Vagina (tissue), 2 donors: ENCODE measurements at regions of chr11 and their contacts with region 1.

Region 1: GRCh38 chr11:32052218-32052617 is 38.7 kb upstream of the RCN1 start:
- DNase-seq: no peak
- H3K4me3 ChIP-seq: no peak overlapping the region
- H3K27ac ChIP-seq: no peak overlapping the region
- H3K4me1 ChIP-seq: no peaks in the 10 kb centered on the region
- H3K27me3 ChIP-seq: no peaks in the 10 kb centered on the region
- CTCF ChIP-seq: peak; percentile 48 to 66 (median 64)
- POLR2A ChIP-seq: no peak

Region 2: DNA sequence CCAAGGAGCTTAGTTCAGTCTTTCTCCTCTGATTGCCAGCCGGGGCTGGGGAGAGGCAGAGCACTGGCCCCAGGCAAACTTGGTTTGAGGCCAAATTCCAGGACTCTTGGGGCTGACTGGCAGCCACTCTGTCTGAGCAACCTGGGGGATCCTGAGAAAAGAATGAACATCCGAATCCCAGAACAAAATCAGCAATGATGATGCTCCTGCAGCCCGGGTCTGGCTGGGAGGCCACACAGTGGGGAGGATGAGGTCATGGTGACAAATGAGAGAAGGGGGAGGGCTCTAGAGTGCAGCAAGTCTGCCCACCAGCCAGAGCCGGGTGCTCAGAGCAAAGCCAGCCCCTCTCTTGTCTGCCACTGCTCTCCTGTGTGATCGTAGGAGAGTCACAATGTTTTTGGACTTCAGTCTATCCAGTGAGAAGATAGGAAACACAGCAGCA is 169.2 kb before region 1 on chr11:
- intact Hi-C with region 1: no loop called
- DNase-seq: no peak
- H3K4me3 ChIP-seq: no peak overlapping the region
- H3K27ac ChIP-seq: no peak overlapping the region
- H3K4me1 ChIP-seq: no peaks in the 10 kb centered on the region
- H3K27me3 ChIP-seq: no peaks in the 10 kb centered on the region
- CTCF ChIP-seq: no peak
- POLR2A ChIP-seq: no peak

Region 3: DNA sequence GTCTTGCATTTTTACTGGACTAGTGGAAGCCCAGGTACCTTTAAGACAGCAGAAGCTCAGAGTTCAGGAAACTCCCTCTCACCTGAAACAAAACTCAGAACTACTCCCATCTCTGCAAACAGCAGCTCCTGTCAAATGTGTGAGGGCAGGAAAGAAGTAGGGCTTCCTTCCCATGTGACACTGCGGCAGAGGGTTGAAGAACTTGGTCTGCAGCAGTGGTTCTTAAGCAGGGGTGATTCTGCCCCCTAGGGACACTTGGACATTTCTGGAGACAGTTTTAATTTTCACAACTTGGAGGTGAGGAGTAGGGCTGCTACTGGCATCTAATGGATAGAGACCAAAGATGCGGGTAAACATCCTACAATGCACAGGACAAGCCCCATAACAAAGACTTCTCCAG is 102.1 kb after region 1 on chr11:
- intact Hi-C with region 1: loop called (anchors 5 kb)
- DNase-seq: no peak
- H3K4me3 ChIP-seq: no peak overlapping the region
- H3K27ac ChIP-seq: no peak overlapping the region
- H3K4me1 ChIP-seq: no peaks in the 10 kb centered on the region
- H3K27me3 ChIP-seq: no peaks in the 10 kb centered on the region
- CTCF ChIP-seq: no peak
- POLR2A ChIP-seq: no peak

Region 4: DNA sequence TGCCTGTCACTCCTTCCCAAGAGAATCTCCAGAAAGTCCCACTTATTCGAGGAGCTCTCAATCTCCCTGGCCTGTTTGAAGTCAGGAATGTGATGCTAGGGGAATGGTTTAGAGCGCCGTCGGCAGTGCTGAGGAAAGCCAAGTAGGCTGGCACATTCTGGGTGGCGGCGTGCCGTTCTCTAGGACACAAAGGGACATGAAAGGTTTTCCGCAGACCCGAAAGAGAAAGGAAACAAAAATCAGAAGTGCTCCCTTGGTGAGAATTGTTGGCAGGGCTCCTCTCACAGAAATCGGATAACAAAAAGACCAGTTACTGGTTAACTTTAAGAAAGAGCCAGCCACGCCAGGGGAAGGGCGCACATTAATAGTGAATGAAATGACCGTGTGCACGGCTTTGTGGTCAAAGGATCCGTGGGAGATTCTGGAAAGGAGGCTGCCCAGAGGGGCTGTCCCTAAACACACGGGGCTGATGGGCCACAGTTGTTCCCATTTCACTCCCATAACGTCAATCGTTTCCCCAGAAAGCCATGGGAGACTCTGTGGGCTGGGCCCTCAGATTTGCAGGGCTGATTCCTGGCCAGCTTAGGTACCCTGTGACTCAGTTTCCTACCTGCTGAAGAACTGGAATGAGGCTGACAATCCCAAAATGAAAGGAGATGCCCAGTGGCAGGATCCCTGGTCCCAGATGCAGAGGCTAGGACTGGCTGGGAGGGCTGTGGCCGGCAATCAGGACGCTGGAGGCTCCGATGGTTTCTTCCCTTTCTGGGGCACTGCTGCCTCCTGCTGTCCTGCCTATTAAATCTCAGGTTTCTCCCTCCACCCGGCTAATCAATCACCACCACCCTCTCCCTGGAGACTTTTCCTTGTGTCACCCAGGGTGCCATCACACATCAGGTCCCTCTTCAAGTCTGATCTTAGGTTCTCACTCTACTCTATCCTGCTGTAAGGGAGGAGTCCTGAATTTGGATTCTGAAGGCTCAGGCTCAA is 120.9 kb after region 1 on chr11:
- intact Hi-C with region 1: loop called (anchors 5 kb)
- DNase-seq: no peak
- H3K4me3 ChIP-seq: peak overlapping the region; percentile 26 to 31
- H3K27ac ChIP-seq: no peak overlapping the region
- H3K4me1 ChIP-seq: peaks cover 10% of the 10 kb centered on the region
- H3K27me3 ChIP-seq: no peaks in the 10 kb centered on the region
- CTCF ChIP-seq: peak; percentile 4 to 38 (median 35)
- POLR2A ChIP-seq: no peak